ENCODE measurements at regions of chr9 and their contacts with region 1.

Region 1: DNA sequence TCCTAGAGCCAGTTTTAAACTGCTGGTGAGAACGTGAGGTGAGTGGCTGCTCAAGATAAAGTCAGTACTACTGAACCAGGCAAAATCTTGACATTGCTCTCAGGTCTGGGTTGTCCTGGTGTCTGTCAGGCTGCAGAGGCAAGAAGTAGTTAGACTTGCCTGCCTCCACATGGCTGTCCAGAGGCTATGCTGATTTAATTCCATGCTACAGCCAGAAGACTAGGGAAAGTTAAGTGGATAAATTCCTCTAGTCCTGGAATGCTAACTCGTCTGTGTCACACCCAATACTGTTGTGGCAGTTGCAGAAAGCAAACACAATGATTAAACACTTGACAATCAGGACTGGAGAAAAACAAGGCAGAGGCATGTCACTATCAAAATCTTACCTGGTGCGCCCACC is 118.9 kb downstream of the ACER2 start:
- DNase-seq: no peak
- ATAC-seq: no peak
- H3K4me3 ChIP-seq: no peak overlapping the region
- H3K4me3 Mint-ChIP-seq: no peak overlapping the region
- H3K27ac ChIP-seq: no peak overlapping the region
- H3K27ac Mint-ChIP-seq: no peak overlapping the region
- H3K4me1 ChIP-seq: no peaks in the 10 kb centered on the region
- H3K4me1 Mint-ChIP-seq: no peaks in the 10 kb centered on the region
- H3K27me3 ChIP-seq: peaks cover 0 to 2% of the 10 kb centered on the region in 2 experiments
- H3K27me3 Mint-ChIP-seq: peaks cover 7 to 9% of the 10 kb centered on the region in 2 donors

Region 2: DNA sequence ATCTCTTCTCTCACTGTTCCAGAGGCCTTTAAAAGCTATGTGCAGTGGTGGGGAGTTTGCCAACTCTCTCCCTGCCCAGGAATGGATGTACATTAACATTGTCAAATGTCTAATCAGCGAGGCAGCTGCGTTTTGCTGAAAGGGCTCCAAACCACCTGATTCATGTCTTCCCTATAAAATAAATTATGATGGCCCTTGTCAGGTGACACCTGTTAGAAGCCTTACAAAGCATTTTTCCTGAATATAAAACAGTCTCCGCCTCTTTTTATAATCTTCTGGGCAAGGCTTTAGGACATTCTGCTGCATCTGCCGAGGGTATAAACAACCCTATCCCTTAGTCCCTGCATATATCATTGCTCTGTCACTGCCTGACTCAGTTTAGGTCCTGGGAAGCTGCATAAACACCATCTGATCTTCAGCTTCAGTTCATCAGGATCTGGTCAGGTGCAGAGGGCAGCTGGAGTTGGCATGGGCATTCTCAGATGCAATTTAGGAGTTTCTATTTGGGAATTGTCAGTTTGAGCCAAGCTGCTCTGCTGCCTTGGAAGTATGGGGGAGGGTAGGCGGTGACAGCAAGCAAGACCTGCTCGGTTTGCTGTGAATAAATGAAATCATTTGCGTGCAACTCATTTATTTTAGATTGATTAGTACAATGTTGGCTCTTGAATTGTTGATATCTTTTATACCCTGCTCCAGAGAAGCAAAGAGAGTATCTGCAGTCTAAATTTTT is 15.4 kb before region 1 on chr9:
- CTCF ChIA-PET with region 1: no interaction called
- POLR2A ChIA-PET with region 1: interaction called, 4 to 12 read pairs
- DNase-seq: no peak
- ATAC-seq: no peak
- H3K4me3 ChIP-seq: no peak overlapping the region
- H3K4me3 Mint-ChIP-seq: no peak overlapping the region
- H3K27ac ChIP-seq: no peak overlapping the region
- H3K27ac Mint-ChIP-seq: no peak overlapping the region
- H3K4me1 ChIP-seq: peaks cover 0 to 3% of the 10 kb centered on the region in 2 experiments
- H3K4me1 Mint-ChIP-seq: peaks cover 0 to 5% (median 0%) of the 10 kb centered on the region in 3 donors
- H3K27me3 ChIP-seq: peaks cover 0 to 9% of the 10 kb centered on the region in 2 experiments
- H3K27me3 Mint-ChIP-seq: peaks cover 8 to 9% of the 10 kb centered on the region in 2 donors

Region 3: DNA sequence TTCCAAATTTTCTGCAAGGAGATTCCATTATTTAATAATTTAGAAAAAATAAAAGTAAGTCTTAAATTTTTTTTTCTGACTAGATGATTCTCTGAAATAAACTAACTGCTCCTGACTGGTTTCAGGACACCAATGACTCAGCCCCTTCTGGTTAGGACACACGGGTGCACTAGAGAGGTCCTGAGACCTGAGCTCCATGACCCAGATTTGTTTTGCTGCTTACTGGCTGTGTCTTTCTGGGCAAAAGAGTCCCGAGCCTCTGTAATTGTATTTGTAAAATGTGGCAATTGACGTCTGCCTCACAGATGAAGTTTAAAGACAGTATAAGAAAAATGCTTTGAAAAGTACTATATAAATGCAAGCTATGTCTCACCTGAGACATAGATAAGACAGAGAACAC is 172.1 kb after region 1 on chr9:
- CTCF ChIA-PET with region 1: no interaction called
- POLR2A ChIA-PET with region 1: interaction called in 1 of 2 experiments, 15 read pairs
- DNase-seq: no peak
- ATAC-seq: no peak
- H3K4me3 ChIP-seq: no peak overlapping the region
- H3K4me3 Mint-ChIP-seq: no peak overlapping the region
- H3K27ac ChIP-seq: no peak overlapping the region
- H3K27ac Mint-ChIP-seq: no peak overlapping the region
- H3K4me1 ChIP-seq: no peaks in the 10 kb centered on the region
- H3K4me1 Mint-ChIP-seq: no peaks in the 10 kb centered on the region
- H3K27me3 ChIP-seq: no peaks in the 10 kb centered on the region
- H3K27me3 Mint-ChIP-seq: peaks cover 0 to 7% of the 10 kb centered on the region in 2 donors

Measured in T-cell (primary cell).